CD8-positive, alpha-beta T cell (primary cell): ENCODE measurements at regions of chr20 and their contacts with region 1.

Region 1: DNA sequence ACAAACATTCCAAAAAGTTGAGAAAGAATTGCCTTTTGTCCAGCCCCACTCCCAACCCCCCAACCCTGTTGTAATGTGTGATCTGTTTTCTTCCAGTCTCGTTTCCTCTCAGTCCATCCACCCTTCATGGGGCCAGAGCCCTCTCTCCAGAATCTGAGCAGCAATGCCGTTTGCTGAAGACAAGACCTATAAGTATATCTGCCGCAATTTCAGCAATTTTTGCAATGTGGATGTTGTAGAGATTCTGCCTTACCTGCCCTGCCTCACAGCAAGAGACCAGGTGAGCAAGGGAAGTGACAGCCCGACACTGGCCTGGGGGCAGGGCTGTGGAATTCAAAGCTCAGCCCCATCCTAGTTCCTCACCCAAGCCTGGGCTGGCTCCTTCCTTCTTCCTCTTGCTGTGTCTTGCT is 7.8 kb downstream of the MAVS start:
- DNase-seq: no peak
- ATAC-seq: no peak
- H3K4me3 ChIP-seq: no peak overlapping the region
- H3K4me3 Mint-ChIP-seq: no peak overlapping the region
- H3K27ac ChIP-seq: no peak overlapping the region
- H3K27ac Mint-ChIP-seq: no peak overlapping the region
- H3K4me1 ChIP-seq: no peaks in the 10 kb centered on the region
- H3K4me1 Mint-ChIP-seq: peaks cover 12% of the 10 kb centered on the region
- H3K27me3 ChIP-seq: no peaks in the 10 kb centered on the region
- H3K27me3 Mint-ChIP-seq: no peaks in the 10 kb centered on the region
- CTCF ChIP-seq: no peak

Region 2: DNA sequence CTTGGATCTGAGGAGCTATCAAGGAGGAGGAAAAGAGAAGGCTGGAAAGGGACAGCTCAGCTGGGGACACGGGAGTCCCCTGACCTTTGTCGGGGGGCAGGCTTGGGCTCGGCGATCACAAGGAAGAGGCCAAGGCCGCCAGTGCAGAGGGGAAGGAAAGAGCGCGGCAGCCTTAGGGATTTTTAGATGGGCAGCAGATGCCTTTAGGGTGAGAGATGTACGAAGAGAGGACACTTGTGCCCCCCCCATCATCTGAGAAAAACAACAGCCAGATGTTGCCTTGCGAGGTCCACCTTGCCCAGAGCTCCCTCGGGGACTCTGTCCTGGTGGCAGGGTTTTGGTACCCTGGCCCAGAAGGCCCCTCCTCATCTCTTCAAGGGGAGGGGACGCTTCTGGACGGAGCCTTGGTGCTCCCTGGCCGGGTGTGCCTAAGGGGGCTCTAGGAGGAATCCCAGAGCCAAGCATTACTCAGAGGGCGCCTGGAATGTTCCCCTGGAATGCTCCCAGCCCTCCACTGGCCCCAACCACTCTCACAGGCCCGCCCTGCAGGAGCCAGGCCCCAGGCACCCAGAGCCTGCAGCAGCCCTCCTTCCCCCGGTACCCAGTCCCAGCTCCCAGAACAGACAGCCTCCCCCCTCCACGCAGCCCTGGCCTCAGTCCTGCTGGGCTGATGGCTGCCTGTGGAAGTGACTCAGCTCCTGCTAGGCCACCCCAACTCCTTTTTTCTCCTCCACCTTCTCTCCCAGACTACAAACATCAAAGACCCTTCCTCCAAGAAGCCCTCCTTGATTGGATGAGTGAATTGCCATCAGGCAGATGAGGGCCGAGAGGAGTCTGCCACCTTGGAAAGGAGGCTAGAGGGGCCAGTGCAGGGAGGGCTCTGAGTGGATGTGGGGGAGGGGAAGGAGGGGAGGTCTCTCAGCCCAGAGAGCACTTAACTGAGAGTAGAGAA is 174.4 kb before region 1 on chr20:
- CTCF ChIA-PET with region 1: interaction called, 5 read pairs
- POLR2A ChIA-PET with region 1: no interaction called
- intact Hi-C with region 1: loop called in 1 of 2 experiments (anchors 1 kb)
- DNase-seq: no peak
- ATAC-seq: no peak
- H3K4me3 ChIP-seq: no peak overlapping the region
- H3K4me3 Mint-ChIP-seq: no peak overlapping the region
- H3K27ac ChIP-seq: no peak overlapping the region
- H3K27ac Mint-ChIP-seq: no peak overlapping the region
- H3K4me1 ChIP-seq: peaks cover 4% of the 10 kb centered on the region
- H3K4me1 Mint-ChIP-seq: peaks cover 10% of the 10 kb centered on the region
- H3K27me3 ChIP-seq: peaks cover 0 to 10% of the 10 kb centered on the region in 2 experiments
- H3K27me3 Mint-ChIP-seq: peaks cover 45% of the 10 kb centered on the region
- CTCF ChIP-seq: no peak

Region 3: GRCh38 chr20:3753098-3753980 is 101.1 kb before region 1 on chr20:
- CTCF ChIA-PET with region 1: interaction called, 32 read pairs
- POLR2A ChIA-PET with region 1: no interaction called
- intact Hi-C with region 1: loop called in 1 of 2 experiments (anchors 1 kb)
- DNase-seq: peak; percentile 37 to 82 (median 67)
- ATAC-seq: peak; percentile 87
- H3K4me3 ChIP-seq: no peak overlapping the region
- H3K4me3 Mint-ChIP-seq: no peak overlapping the region
- H3K27ac ChIP-seq: no peak overlapping the region
- H3K27ac Mint-ChIP-seq: no peak overlapping the region
- H3K4me1 ChIP-seq: no peaks in the 10 kb centered on the region
- H3K4me1 Mint-ChIP-seq: peaks cover 4% of the 10 kb centered on the region
- H3K27me3 ChIP-seq: no peaks in the 10 kb centered on the region
- H3K27me3 Mint-ChIP-seq: no peaks in the 10 kb centered on the region
- CTCF ChIP-seq: peak; percentile 57

Region 4: GRCh38 chr20:3781153-3781910 is 73.1 kb before region 1 on chr20 and contains the start of gene SPEF1:
- CTCF ChIA-PET with region 1: interaction called, 66 read pairs
- POLR2A ChIA-PET with region 1: interaction called, 6 read pairs
- intact Hi-C with region 1: loop called (anchors 1 kb)
- DNase-seq: peak in 5 of 9 experiments; percentile 37 to 82 (median 39)
- ATAC-seq: peak; percentile 43
- H3K4me3 ChIP-seq: peak within 1 kb of the TSS in 1 of 2 experiments; percentile 26
- H3K4me3 Mint-ChIP-seq: peak within 1 kb of the TSS; percentile 46
- H3K27ac ChIP-seq: peak within 1 kb of the TSS in 1 of 2 experiments; percentile 16
- H3K27ac Mint-ChIP-seq: peak within 1 kb of the TSS; percentile 27
- H3K4me1 ChIP-seq: peaks cover 43% of the 10 kb centered on the region
- H3K4me1 Mint-ChIP-seq: peaks cover 37% of the 10 kb centered on the region
- H3K27me3 ChIP-seq: peaks cover 0 to 3% of the 10 kb centered on the region in 2 experiments
- H3K27me3 Mint-ChIP-seq: peaks cover 5% of the 10 kb centered on the region
- CTCF ChIP-seq: no peak
- total RNA-seq, gene SPEF1: 0.16 TPM in 1 of 2 experiments, not detected in the other

Region 5: DNA sequence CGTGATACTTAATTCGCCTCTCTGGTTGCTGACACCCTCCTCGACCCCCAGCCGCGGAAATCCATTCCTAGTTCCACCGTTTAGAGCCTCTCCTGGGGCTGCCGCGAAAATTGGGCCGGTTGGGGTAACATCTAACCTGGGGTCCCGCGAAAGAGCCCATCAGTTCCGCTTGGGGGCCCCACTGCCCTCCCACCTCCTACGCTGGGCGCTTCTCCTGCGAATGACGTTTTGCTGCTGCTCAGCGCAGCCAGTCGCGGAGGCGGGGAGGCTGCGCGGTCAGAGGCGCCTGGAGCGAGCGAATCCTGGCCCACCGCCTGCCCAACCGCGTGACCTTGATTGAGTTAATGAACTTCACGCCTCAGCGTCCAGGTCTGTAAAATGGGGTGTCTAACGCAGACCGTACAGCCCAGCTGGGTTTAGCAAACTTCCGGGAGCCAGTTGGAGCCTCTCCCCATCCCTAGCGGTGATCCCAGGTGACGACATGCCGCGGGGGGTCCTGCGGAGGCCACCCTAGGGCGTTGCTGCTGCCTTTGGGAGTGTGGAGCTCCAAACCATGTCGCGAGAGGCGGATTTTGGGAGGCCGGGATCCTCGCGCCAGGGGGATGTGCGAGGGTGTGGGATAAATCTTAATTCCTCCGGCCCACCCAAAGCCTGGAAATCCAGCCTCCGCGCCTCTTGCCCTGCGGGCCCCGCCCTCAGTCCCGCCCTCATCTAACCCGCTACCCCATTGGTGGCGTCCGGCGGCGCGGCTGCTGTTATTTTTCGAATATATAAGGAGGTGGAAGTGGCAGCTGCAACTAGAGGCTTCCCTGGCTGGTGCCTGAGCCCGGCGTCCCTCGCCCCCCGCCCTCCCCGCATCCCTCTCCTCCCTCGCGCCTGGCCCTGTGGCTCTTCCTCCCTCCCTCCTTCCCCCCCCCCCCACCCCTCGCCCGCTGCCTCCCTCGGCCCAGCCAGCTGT is 58.7 kb before region 1 on chr20 and contains the start of gene CDC25B:
- CTCF ChIA-PET with region 1: interaction called, 10 read pairs
- POLR2A ChIA-PET with region 1: interaction called, 3 read pairs
- intact Hi-C with region 1: loop called in 1 of 2 experiments (anchors 2 kb)
- DNase-seq: peak; percentile 80 to 94 (median 92)
- ATAC-seq: peak; percentile 77
- H3K4me3 ChIP-seq: peak within 1 kb of the TSS; percentile 95 to 98
- H3K4me3 Mint-ChIP-seq: peak within 1 kb of the TSS; percentile 98
- H3K27ac ChIP-seq: peak within 1 kb of the TSS; percentile 95 to 99
- H3K27ac Mint-ChIP-seq: peak within 1 kb of the TSS; percentile 98
- H3K4me1 ChIP-seq: peaks cover 37% of the 10 kb centered on the region
- H3K4me1 Mint-ChIP-seq: peaks cover 42% of the 10 kb centered on the region
- H3K27me3 ChIP-seq: no peaks in the 10 kb centered on the region
- H3K27me3 Mint-ChIP-seq: no peaks in the 10 kb centered on the region
- CTCF ChIP-seq: peak; percentile 60
- total RNA-seq, gene CDC25B: 135 to 140 TPM

Region 6: GRCh38 chr20:3839169-3839727 is 15.2 kb before region 1 on chr20:
- CTCF ChIA-PET with region 1: interaction called, 12 read pairs
- POLR2A ChIA-PET with region 1: no interaction called
- intact Hi-C with region 1: no loop called
- DNase-seq: no peak
- ATAC-seq: no peak
- H3K4me3 ChIP-seq: no peak overlapping the region
- H3K4me3 Mint-ChIP-seq: no peak overlapping the region
- H3K27ac ChIP-seq: no peak overlapping the region
- H3K27ac Mint-ChIP-seq: no peak overlapping the region
- H3K4me1 ChIP-seq: no peaks in the 10 kb centered on the region
- H3K4me1 Mint-ChIP-seq: peaks cover 3% of the 10 kb centered on the region
- H3K27me3 ChIP-seq: no peaks in the 10 kb centered on the region
- H3K27me3 Mint-ChIP-seq: no peaks in the 10 kb centered on the region
- CTCF ChIP-seq: no peak

Region 7: DNA sequence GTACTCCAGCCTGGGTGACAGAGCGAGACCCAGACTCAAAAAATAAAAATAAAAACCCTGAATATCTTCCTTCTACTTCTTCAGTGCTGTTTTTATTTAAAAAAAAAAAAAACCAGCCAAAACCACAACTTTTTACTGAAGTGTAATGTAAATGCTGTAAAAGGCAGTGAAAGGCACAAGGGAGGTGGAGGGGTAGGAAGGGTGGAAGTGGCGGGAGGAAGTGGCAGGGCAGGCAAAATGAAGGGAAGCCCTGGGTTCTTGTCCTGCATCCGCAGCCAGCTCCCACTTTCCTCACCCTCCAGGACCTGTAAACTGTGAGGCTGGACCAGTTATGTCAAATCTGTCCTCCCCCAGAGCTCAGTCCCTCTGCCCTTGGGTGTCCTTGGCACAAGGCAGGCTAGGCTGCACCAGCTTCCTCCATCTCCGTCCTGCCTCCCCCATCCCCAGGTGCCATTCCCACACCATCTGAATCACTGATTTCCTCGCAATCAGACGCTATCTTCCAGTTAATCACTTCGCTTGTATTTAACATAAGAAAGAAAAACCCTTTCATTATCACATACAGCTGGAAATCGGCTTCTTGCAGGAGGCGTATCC is 21.0 kb after region 1 on chr20:
- CTCF ChIA-PET with region 1: interaction called, 11 read pairs
- POLR2A ChIA-PET with region 1: interaction called, 4 read pairs
- intact Hi-C with region 1: no loop called
- DNase-seq: no peak
- ATAC-seq: no peak
- H3K4me3 ChIP-seq: no peak overlapping the region
- H3K4me3 Mint-ChIP-seq: no peak overlapping the region
- H3K27ac ChIP-seq: no peak overlapping the region
- H3K27ac Mint-ChIP-seq: no peak overlapping the region
- H3K4me1 ChIP-seq: peaks cover 7% of the 10 kb centered on the region
- H3K4me1 Mint-ChIP-seq: peaks cover 15% of the 10 kb centered on the region
- H3K27me3 ChIP-seq: no peaks in the 10 kb centered on the region
- H3K27me3 Mint-ChIP-seq: no peaks in the 10 kb centered on the region
- CTCF ChIP-seq: no peak